ENCODE measurements at regions of chr18 and their contacts with region 1.

Region 1: DNA sequence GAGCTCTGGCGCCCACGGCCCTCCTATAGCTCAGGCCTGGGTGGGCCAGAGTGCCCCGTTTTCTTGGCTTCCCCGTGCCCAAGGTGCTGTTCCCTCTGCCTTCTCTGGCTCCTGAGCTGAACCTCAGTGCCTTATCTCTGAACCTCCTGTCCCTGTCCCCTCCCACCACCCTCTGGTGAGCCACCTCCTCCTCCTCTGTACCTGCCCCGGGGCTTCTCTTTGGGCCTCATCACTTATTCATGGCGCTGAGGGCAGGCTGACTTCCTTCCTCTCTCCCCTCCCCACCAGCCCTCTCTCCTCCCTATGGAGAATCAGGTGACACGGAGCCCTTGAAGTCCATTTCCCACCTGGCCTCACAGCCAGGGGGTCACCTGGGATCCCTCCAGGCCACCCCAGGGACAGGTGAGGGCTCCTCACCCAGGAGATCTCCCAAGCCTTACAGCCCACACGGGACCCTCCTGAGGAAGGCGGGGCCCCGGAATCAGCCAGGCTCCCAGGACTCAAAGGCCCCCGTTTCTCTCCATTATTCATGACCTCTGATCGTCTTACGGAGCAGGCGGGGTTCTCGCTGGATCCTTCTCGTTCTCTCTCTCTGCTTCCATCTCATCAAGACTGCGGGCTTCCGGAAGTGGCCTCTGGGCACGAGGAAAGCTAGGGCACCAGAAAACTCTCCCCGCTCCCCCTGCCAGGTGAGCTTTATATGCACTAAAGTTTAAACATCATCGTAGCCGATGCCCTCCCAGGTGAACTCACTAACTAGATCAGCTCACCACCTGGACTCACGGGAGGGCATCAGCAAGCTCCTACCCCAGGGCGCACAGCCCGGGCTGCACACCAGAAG is at the start of gene LOXHD1:
- DNase-seq: no peak
- ATAC-seq: no peak
- H3K4me3 ChIP-seq: no peak within 1 kb of the TSS
- H3K27ac ChIP-seq: no peak within 1 kb of the TSS
- H3K4me1 ChIP-seq: no peaks in the 10 kb centered on the region
- H3K27me3 ChIP-seq: no peaks in the 10 kb centered on the region
- CTCF ChIP-seq: no peak
- POLR2A ChIP-seq: no peak
- total RNA-seq, gene LOXHD1: not detected

Region 2: DNA sequence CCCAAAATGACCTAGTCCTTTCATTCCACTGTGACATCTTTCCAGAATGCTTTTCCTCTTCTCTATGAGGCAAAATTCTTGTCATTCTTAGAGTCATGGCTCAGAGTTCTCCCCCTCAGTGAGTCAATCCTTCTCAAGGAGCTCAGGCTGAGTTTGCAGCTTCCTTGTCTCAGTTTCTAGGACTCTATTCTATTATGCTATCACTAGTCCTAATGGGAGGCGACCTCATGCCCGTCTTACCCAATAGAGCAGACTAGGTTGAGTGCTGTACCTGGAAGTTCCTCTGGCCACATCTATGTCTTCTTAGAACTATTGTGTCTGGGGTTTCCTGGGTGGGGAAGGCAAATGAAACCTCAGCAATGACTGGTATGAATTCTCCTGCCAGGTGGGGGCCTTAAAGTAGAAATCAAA is 501.7 kb before region 1 on chr18:
- intact Hi-C with region 1: loop called (anchors 10 kb)
- DNase-seq: no peak
- ATAC-seq: no peak
- H3K4me3 ChIP-seq: no peak overlapping the region
- H3K27ac ChIP-seq: no peak overlapping the region
- H3K4me1 ChIP-seq: no peaks in the 10 kb centered on the region
- H3K27me3 ChIP-seq: no peaks in the 10 kb centered on the region
- CTCF ChIP-seq: no peak
- POLR2A ChIP-seq: no peak

Region 3: GRCh38 chr18:46281185-46282176 is 375.9 kb before region 1 on chr18:
- intact Hi-C with region 1: loop called (anchors 5 to 10 kb)
- DNase-seq: peak; percentile 55 to 69 (median 65)
- ATAC-seq: peak; percentile 92 to 97 (median 94)
- H3K4me3 ChIP-seq: no peak overlapping the region
- H3K27ac ChIP-seq: no peak overlapping the region
- H3K4me1 ChIP-seq: no peaks in the 10 kb centered on the region
- H3K27me3 ChIP-seq: no peaks in the 10 kb centered on the region
- CTCF ChIP-seq: peak; percentile 85 to 93 (median 88)
- POLR2A ChIP-seq: no peak